Activated CD8-positive, alpha-beta T cell treated with anti-CD3 and anti-CD28 coated beads for 36 hours (primary cell): ENCODE measurements at regions of chr1 and their contacts with region 1.

Region 1: DNA sequence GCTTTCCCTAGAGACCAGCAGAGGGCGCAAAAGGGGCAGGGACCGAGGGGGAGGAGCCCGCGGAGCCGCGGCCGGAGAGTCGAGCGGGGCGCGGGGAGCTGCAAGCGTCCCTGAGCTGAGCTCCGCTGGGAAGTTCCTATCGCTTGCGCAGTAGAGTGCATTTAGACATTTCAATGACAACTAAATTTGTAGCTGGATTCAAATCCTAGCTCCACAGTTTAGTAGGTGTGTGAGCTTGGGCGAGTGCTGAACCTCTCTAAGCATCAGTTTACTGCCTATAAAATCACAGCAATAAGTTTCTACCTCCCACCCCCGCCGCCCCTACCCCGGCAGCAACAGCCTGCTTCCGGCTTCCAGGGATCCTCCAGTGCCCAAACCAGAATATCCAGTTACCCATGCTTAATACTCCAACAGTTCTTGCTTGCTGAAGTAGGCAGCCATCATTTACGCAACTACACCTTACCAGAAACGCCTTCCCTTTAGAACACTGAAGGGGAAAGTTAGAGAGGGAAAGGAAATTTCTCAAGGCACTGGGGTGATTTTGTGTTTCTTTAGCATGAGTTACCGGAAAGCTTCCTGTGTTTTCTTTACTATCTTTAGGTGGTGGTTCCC is 9.1 kb downstream of the TLR5 start:
- DNase-seq: peak; percentile 84
- ATAC-seq: peak; percentile 94
- H3K4me3 Mint-ChIP-seq: peak overlapping the region; percentile 14
- H3K27ac Mint-ChIP-seq: no peak overlapping the region
- H3K4me1 Mint-ChIP-seq: peaks cover 14% of the 10 kb centered on the region
- H3K27me3 Mint-ChIP-seq: peaks cover 13% of the 10 kb centered on the region
- CTCF ChIP-seq: peak; percentile 31

Region 2: DNA sequence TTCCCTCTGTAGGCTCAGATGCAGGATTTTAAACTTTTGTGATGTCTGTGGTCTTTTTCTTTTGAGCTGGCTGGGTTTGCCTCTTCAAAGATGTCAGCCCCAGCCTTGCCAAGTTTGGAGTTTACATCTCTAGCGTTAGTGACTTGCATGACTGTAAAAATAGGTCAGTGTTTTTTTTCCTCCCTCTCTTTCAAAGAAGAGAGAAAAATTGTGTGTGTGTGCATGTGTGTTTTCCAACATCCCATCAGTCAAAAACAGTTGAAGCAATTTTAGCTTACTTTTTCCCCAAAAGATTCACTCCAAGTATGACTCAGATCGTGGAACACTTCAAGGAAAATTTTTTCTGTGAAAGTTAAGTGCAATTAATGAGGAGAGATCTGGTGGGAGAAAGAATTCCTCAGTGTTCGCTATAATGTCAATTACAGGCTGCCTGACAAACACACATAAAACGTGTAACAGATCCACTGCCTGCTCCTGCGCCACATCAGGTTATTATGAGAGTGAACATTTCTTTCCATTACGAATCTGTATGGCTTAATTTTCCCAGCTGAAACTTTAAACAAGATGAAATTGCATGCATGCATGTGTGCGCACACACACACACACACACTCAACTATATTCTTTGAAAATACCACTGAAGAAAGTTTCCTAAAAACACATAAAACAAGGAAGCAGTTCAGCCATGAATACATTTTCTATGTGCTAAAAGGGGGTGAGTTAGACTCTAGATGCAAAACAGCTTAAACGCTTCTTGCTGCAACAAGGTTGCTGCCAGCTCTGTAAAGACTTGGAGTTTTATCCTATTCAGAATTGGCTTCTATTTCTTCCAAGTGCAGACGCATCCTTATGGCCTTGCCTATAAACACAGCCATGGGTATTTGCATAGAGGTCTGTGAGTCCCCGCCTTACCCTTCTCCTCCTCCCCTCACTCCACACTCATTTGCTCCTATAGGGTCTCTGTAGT is 46.4 kb before region 1 on chr1:
- CTCF ChIA-PET with region 1: interaction called, 12 read pairs
- POLR2A ChIA-PET with region 1: no interaction called
- intact Hi-C with region 1: no loop called
- DNase-seq: no peak
- ATAC-seq: no peak
- H3K4me3 Mint-ChIP-seq: no peak overlapping the region
- H3K27ac Mint-ChIP-seq: no peak overlapping the region
- H3K4me1 Mint-ChIP-seq: peaks cover 9% of the 10 kb centered on the region
- H3K27me3 Mint-ChIP-seq: no peaks in the 10 kb centered on the region
- CTCF ChIP-seq: no peak

Region 3: GRCh38 chr1:223152399-223152798 is 18.5 kb after region 1 on chr1:
- CTCF ChIA-PET with region 1: interaction called, 42 read pairs
- POLR2A ChIA-PET with region 1: no interaction called
- intact Hi-C with region 1: no loop called
- DNase-seq: no peak
- ATAC-seq: no peak
- H3K4me3 Mint-ChIP-seq: no peak overlapping the region
- H3K27ac Mint-ChIP-seq: no peak overlapping the region
- H3K4me1 Mint-ChIP-seq: peaks cover 13% of the 10 kb centered on the region
- H3K27me3 Mint-ChIP-seq: no peaks in the 10 kb centered on the region
- CTCF ChIP-seq: no peak

Region 4: DNA sequence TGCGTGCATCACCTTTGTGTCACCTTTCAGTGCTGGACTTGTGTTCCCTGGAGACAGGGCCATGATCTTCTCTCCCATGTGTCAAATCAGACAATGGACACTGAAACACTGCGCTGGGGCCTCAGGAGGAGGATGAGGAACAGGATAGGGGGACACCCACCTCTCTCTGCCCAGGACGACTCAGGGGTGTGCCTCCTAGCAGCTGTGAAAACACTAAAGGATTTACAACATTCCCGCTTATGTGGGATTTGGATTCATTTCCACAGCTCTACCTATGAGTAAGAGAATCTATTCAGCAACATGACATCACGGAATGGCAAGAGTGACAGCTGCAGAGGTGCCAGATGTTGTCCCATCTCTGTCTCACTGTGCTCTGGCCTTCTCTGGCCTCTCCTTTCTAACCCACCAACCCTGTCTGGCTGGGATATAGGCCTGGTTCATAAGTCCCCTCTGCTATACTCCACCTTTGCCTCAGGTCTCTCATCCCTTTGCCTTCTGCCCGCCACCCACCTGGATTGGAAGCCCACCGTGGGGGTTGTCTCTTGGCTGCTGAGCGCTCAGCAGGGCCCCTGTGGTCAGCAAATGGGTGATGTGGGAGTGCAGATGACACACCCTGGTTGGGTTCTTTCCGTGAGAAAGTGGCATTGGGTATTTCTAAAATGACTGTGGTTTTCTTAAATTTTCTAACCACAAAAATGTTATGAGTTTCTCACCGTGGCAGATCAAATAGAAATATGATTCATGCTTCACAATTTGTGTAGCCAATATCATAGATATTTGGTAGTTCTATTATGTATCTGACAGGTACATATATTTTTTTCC is 56.2 kb after region 1 on chr1:
- CTCF ChIA-PET with region 1: interaction called, 11 read pairs
- POLR2A ChIA-PET with region 1: interaction called, 4 read pairs
- intact Hi-C with region 1: no loop called
- DNase-seq: peak; percentile 84
- ATAC-seq: peak; percentile 89
- H3K4me3 Mint-ChIP-seq: peak overlapping the region; percentile 48
- H3K27ac Mint-ChIP-seq: peak overlapping the region; percentile 96
- H3K4me1 Mint-ChIP-seq: peaks cover 40% of the 10 kb centered on the region
- H3K27me3 Mint-ChIP-seq: peaks cover 4% of the 10 kb centered on the region
- CTCF ChIP-seq: no peak

Region 5: DNA sequence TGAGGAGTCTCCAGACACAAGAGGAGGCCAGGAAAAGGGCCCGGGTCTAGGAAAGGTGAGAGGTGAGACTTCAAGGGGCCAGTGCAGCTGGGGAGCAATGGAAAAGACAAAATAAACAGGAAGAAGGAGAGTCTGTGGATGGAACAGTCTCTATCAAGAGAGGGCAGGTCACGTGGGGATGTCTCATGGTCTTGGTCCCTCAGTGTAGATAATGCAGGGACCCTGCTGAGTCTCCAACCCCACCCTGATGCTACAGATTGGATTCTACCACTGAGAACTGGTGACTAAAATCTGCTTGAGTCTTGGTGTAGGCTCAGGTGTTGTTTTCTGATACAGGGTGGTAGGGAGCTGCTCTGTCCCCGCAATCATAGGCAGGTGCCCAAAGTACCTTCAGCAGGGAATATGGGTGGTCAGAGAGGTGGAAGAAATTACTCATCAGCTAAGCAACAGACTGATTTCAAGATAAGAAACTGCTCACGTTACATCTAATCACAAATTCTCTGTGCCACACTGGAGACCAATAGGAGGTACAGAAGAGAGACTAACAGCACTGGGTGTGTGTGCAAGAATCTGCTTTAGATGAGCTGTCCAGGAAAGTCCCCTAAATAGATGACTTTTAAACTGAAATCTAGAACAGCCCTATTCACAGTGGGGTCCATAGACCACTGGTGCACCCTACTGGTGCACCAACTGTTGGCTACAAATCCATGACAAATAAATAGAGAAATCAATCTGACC is 110.6 kb after region 1 on chr1:
- CTCF ChIA-PET with region 1: interaction called, 110 read pairs
- POLR2A ChIA-PET with region 1: no interaction called
- intact Hi-C with region 1: loop called (anchors 2 kb)
- DNase-seq: peak; percentile 69
- ATAC-seq: peak; percentile 95
- H3K4me3 Mint-ChIP-seq: no peak overlapping the region
- H3K27ac Mint-ChIP-seq: peak overlapping the region; percentile 33
- H3K4me1 Mint-ChIP-seq: peaks cover 48% of the 10 kb centered on the region
- H3K27me3 Mint-ChIP-seq: no peaks in the 10 kb centered on the region
- CTCF ChIP-seq: peak; percentile 61

Region 6: DNA sequence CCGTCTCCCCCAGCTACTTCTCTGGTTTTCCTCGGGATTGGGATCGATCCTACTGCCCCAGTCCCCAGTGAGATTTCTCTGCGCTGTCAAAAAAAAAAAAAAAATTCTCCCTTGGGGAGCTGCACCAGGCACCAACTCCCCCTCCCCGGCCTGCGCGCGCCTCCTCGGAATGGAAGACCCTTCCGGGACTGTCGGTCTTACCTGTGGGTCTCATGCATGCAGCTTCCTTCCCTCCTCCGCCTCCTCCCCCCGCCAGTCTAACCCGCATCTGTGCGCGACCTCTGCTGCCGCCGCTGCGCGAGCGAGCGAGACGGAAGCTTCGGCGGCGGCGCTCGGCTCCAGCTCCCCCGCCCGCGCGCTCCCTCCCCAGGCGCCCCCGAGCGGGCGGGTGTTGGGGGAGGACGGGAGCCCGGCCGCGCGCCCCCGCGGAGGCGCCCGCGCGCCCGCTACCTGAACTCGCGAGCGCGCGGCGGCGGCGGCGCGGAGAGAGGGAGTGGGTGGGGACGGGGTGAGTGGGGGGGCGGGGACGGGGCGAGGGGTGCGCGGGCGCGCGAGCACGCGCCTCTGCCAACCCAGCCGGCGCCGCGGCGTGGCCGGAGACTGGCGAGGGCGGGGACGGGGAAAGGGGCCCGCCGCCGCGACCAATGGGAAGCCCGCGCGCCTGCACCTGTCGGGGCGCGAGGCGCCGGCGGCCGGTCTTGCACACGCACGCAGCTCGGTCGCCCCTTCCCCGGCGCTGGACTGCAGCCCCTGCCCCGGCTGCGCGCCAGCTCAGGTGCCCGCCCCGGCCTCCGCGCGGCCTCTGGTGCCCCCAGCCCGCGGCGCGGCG is 230.1 kb after region 1 on chr1 and contains the start of gene SUSD4:
- CTCF ChIA-PET with region 1: interaction called, 20 read pairs
- POLR2A ChIA-PET with region 1: no interaction called
- intact Hi-C with region 1: no loop called
- DNase-seq: peak; percentile 74
- ATAC-seq: peak; percentile 91
- H3K4me3 Mint-ChIP-seq: peak within 1 kb of the TSS; percentile 82
- H3K27ac Mint-ChIP-seq: no peak within 1 kb of the TSS
- H3K4me1 Mint-ChIP-seq: peaks cover 16% of the 10 kb centered on the region
- H3K27me3 Mint-ChIP-seq: peaks cover 31% of the 10 kb centered on the region
- CTCF ChIP-seq: no peak
- total RNA-seq, gene SUSD4: 0.29 to 0.43 TPM